Activated CD4-positive, alpha-beta T cell treated with anti-CD3 and anti-CD28 coated beads for 36 hours (primary cell): ENCODE measurements at regions of chr9 and their contacts with region 1.

Region 1: GRCh38 chr9:89278997-89279739 is 31.8 kb upstream of the CKS2 start:
- DNase-seq: peak; percentile 22
- ATAC-seq: peak; percentile 28
- H3K4me3 Mint-ChIP-seq: no peak overlapping the region
- H3K27ac Mint-ChIP-seq: no peak overlapping the region
- H3K4me1 Mint-ChIP-seq: peaks cover 35% of the 10 kb centered on the region
- H3K27me3 Mint-ChIP-seq: no peaks in the 10 kb centered on the region

Region 2: DNA sequence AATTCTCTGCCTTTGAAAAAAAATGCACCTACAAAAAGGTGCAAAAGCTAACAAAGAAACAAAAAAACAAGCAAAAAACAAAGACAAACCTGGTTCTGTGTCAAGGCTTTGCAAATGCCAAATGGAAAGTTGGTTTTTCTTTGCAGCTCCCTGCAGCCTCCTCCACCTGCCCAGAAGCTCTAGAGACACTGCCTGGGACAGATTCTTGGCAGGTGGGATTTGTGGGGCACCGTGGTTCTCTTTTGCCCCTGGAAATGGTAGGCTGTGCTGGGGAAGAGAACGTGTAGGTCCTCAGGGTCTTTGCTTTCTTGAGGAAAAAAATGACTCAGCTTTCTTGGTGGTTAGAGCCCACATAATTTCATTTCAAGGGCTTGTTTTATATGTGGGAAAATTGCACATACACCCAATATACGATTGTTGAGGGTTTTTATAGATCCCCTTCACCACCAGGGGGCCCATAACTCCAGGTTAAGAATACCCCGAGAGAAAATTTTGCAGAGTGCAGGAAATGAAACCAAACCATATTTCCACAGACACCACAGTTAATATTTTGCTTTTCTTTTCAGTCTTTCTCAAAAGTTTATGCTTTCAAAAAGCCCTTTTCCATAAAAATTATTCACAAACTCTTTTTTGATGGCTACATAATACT is 685.5 kb before region 1 on chr9:
- CTCF ChIA-PET with region 1: no interaction called
- POLR2A ChIA-PET with region 1: no interaction called
- intact Hi-C with region 1: loop called (anchors 2 to 5 kb)
- DNase-seq: peak; percentile 71
- ATAC-seq: peak; percentile 66
- H3K4me3 Mint-ChIP-seq: no peak overlapping the region
- H3K27ac Mint-ChIP-seq: no peak overlapping the region
- H3K4me1 Mint-ChIP-seq: peaks cover 6% of the 10 kb centered on the region
- H3K27me3 Mint-ChIP-seq: peaks cover 13% of the 10 kb centered on the region

Region 3: GRCh38 chr9:89008744-89009545 is 270.2 kb before region 1 on chr9:
- CTCF ChIA-PET with region 1: interaction called, 3 read pairs
- POLR2A ChIA-PET with region 1: no interaction called
- intact Hi-C with region 1: loop called in 1 of 2 experiments (anchors 5 kb)
- DNase-seq: no peak
- ATAC-seq: no peak
- H3K4me3 Mint-ChIP-seq: no peak overlapping the region
- H3K27ac Mint-ChIP-seq: no peak overlapping the region
- H3K4me1 Mint-ChIP-seq: no peaks in the 10 kb centered on the region
- H3K27me3 Mint-ChIP-seq: peaks cover 7% of the 10 kb centered on the region

Region 4: GRCh38 chr9:89179895-89180667 is 99.1 kb before region 1 on chr9:
- CTCF ChIA-PET with region 1: interaction called, 10 read pairs
- POLR2A ChIA-PET with region 1: no interaction called
- intact Hi-C with region 1: loop called (anchors 1 to 5 kb)
- DNase-seq: peak; percentile 84
- ATAC-seq: peak; percentile 90
- H3K4me3 Mint-ChIP-seq: peak overlapping the region; percentile 55
- H3K27ac Mint-ChIP-seq: peak overlapping the region; percentile 1
- H3K4me1 Mint-ChIP-seq: peaks cover 24% of the 10 kb centered on the region
- H3K27me3 Mint-ChIP-seq: peaks cover 46% of the 10 kb centered on the region

Region 5: GRCh38 chr9:89690334-89690912 is 411.3 kb after region 1 on chr9:
- CTCF ChIA-PET with region 1: no interaction called
- POLR2A ChIA-PET with region 1: no interaction called
- intact Hi-C with region 1: no loop called
- DNase-seq: no peak
- ATAC-seq: peak; percentile 64
- H3K4me3 Mint-ChIP-seq: no peak overlapping the region
- H3K27ac Mint-ChIP-seq: no peak overlapping the region
- H3K4me1 Mint-ChIP-seq: peaks cover 12% of the 10 kb centered on the region
- H3K27me3 Mint-ChIP-seq: no peaks in the 10 kb centered on the region

Region 6: DNA sequence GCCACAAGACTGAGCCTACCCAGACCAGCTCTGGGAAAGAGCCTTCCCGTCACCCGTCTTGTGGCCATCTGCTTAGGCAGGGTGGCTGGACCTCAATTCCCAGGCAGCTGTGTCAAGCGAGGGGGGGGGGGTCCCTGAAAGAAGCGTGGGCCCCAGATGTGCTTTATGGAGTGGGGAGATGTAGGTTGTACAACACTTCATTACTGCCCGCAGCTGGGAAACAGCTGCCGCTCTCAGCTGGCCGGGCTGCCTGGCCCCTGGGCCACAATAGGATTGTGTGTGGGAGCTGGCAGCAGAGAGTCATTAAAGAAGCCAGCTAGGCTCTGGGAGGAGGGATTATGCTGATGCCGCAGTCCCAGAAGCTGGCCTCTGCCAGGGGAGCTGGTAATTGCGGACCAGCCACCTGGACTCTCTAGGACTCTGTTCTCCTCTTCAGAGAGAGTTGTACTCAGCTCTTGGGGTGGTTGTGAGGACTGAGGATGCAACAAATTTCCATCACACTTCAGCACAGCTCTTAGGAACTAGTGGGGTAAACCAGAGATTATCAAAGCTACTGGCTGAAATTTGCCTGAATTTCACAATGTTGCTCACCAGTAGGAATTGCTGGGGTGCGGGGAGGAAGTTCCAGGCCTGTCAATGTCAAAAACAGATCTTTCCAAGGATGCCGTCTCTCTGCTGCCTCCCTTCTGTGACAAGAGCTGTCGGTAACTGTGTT is 471.1 kb after region 1 on chr9:
- CTCF ChIA-PET with region 1: no interaction called
- POLR2A ChIA-PET with region 1: no interaction called
- intact Hi-C with region 1: no loop called
- DNase-seq: no peak
- ATAC-seq: no peak
- H3K4me3 Mint-ChIP-seq: no peak overlapping the region
- H3K27ac Mint-ChIP-seq: no peak overlapping the region
- H3K4me1 Mint-ChIP-seq: peaks cover 32% of the 10 kb centered on the region
- H3K27me3 Mint-ChIP-seq: no peaks in the 10 kb centered on the region